ENCODE measurements at regions of chr1 and their contacts with region 1.

Region 1: GRCh38 chr1:75265792-75266191 is 131.6 kb downstream of the LHX8 start:
- H3K4me3 ChIP-seq: no peak overlapping the region
- H3K27ac ChIP-seq: no peak overlapping the region
- H3K4me1 ChIP-seq: no peaks in the 10 kb centered on the region
- CTCF ChIP-seq: peak; percentile 35; the same call in 1 of the 2 replicates

Region 2: GRCh38 chr1:75276385-75276784 is 10.6 kb after region 1 on chr1:
- CTCF ChIA-PET with region 1: interaction called, 26 read pairs
- POLR2A ChIA-PET with region 1: no interaction called
- H3K4me3 ChIP-seq: no peak overlapping the region
- H3K27ac ChIP-seq: no peak overlapping the region
- H3K4me1 ChIP-seq: no peaks in the 10 kb centered on the region
- CTCF ChIP-seq: no peak

Measured in HEK293 (cell line).